Calu3 (cell line): ENCODE measurements at regions of chr7 and their contacts with region 1.

Region 1: DNA sequence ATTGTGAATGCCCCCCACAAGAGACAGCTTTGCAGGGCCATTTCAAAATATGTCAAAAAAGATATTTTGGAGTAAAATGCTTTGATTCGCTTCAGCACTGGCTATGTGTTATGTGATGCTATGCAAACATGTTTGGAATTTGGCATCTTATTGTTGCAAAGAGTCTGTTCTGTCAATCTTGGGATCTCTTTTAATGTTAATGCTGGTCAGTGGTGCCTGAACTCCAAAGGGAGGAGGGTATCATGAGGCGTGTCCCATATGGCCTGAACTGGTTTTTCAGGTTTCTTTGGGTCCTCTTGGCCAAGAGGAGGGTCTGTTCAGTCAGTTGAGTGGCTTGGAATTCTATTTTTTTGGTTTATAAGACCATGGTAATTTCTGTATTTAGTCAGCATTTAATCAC is 81.4 kb downstream of the HECW1 start:
- DNase-seq: no peak
- H3K4me3 Mint-ChIP-seq: no peak overlapping the region
- H3K27ac Mint-ChIP-seq: no peak overlapping the region
- H3K4me1 Mint-ChIP-seq: no peaks in the 10 kb centered on the region
- H3K27me3 Mint-ChIP-seq: peaks cover 39% of the 10 kb centered on the region
- CTCF ChIP-seq: no peak

Region 2: DNA sequence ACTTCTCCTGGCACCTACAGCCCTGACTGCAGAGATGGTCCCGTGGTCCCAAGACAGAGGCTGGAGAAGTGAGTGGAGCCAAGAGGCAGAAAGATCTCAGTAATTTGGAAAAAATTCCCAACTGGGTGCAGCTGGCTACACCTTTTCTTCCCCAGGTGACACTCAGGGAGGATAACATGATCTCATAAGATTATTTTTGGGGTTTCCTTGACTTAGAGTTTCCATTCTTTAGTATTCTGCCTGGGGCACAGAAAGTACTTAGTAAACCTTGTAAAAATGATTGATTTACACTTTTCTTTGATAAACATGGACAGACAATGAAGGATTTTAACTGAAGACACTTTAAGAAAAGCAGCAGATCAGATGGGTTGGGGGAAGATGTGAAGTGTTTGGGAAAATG is 42.8 kb before region 1 on chr7:
- CTCF ChIA-PET with region 1: no interaction called
- intact Hi-C with region 1: loop called (anchors 5 kb)
- DNase-seq: no peak
- H3K4me3 Mint-ChIP-seq: no peak overlapping the region
- H3K27ac Mint-ChIP-seq: no peak overlapping the region
- H3K4me1 Mint-ChIP-seq: no peaks in the 10 kb centered on the region
- H3K27me3 Mint-ChIP-seq: peaks cover 7% of the 10 kb centered on the region
- CTCF ChIP-seq: no peak

Region 3: GRCh38 chr7:43170571-43170970 is 23.3 kb before region 1 on chr7:
- CTCF ChIA-PET with region 1: no interaction called
- intact Hi-C with region 1: no loop called
- DNase-seq: no peak
- H3K4me3 Mint-ChIP-seq: no peak overlapping the region
- H3K27ac Mint-ChIP-seq: no peak overlapping the region
- H3K4me1 Mint-ChIP-seq: no peaks in the 10 kb centered on the region
- H3K27me3 Mint-ChIP-seq: peaks cover 66% of the 10 kb centered on the region
- CTCF ChIP-seq: no peak

Region 4: DNA sequence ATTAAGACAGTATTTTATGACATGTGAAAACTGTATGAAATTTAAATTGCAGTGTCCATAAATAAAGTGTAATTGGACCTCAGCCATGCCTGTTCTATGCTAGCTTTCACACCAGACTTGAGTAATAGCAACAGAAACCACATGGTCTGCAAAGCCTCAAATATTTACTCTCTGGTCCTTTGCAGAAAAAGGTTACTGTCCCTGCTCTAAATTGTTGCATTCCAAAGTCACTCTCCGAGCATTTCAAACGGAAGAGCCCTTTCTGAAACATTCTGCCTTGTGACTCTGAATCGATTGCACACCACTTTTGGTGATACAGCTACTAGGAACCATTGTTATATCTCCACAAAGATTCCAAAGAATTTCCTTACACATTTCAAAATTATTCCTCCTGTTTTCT is 308.0 kb after region 1 on chr7:
- CTCF ChIA-PET with region 1: no interaction called
- intact Hi-C with region 1: no loop called
- DNase-seq: peak; percentile 47
- H3K4me3 Mint-ChIP-seq: no peak overlapping the region
- H3K27ac Mint-ChIP-seq: no peak overlapping the region
- H3K4me1 Mint-ChIP-seq: peaks cover 11% of the 10 kb centered on the region
- H3K27me3 Mint-ChIP-seq: no peaks in the 10 kb centered on the region
- CTCF ChIP-seq: no peak